Activated naive CD4-positive, alpha-beta T cell treated with anti-CD3 and anti-CD28 coated beads, Interleukin-2, amount 10 ng/mL, durations not matched to agents 7 days and 5 days (primary cell): ENCODE measurements at regions of chr12 and their contacts with region 1.

Region 1: GRCh38 chr12:93502802-93503623 is 35.7 kb downstream of the MRPL42 start:
- DNase-seq: peak; percentile 79
- H3K4me3 Mint-ChIP-seq: no peak overlapping the region
- H3K27ac Mint-ChIP-seq: no peak overlapping the region
- H3K4me1 Mint-ChIP-seq: peaks cover 34% of the 10 kb centered on the region
- H3K27me3 Mint-ChIP-seq: no peaks in the 10 kb centered on the region

Region 2: DNA sequence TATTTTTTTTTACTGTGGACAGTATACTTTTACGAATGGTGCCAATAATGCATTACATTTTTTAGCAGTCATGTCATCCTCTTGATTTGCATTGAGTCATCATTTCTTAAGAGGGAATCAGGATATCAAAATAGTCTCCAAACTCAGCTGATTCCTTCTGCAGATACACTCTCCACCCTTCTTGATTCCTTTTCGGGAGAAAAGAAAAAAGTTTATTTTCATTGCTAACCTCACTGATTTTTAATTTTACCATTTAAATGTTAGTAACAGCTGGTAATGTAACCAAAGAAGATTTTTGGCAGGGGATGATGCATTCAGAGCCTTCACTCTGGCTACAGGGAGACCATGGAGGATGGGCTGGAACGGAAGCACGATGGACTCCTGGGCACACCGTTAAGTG is 11.8 kb after region 1 on chr12:
- CTCF ChIA-PET with region 1: interaction called, 15 read pairs
- DNase-seq: no peak
- H3K4me3 Mint-ChIP-seq: no peak overlapping the region
- H3K27ac Mint-ChIP-seq: no peak overlapping the region
- H3K4me1 Mint-ChIP-seq: peaks cover 2% of the 10 kb centered on the region
- H3K27me3 Mint-ChIP-seq: peaks cover 1% of the 10 kb centered on the region

Region 3: GRCh38 chr12:93569656-93570551 is 66.9 kb after region 1 on chr12:
- CTCF ChIA-PET with region 1: interaction called, 44 read pairs
- DNase-seq: peak; percentile 89
- H3K4me3 Mint-ChIP-seq: peak overlapping the region; percentile 81
- H3K27ac Mint-ChIP-seq: peak overlapping the region; percentile 93
- H3K4me1 Mint-ChIP-seq: peaks cover 39% of the 10 kb centered on the region
- H3K27me3 Mint-ChIP-seq: peaks cover 18% of the 10 kb centered on the region

Region 4: DNA sequence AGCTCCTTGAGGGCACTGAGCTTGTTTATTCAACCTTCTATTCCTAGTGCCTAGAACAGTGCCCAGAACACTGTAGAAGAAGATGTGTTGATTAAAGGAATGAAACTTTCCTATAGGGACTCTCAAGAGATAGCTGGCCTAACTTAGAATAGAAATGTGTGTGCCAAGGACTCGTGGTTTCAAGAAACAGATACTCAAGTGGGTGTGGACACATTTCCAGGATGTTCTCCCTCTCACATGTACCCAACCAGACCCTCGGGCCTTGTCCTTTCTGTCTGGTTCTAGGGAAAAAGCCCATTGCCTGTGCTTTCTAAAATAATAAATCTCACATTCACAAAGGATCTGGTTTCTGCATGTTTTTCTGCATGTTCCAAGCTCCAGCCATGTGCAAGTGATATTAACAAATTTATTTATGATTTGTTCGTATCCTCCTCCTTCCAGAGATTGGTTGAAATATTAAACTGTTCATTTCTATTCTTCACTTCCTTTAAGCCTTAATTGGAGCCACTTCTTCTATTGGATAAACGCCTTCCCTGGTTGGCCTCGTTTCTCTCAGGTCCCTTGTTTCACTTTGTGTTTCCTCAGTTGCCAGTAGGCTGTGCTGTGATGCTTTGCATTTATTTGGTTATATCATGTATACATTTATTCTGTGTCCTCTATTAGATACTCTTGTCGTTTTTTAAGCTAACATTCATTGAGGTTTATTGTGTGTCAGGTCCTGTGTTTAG is 263.9 kb after region 1 on chr12:
- CTCF ChIA-PET with region 1: interaction called, 37 read pairs
- DNase-seq: peak; percentile 74
- H3K4me3 Mint-ChIP-seq: no peak overlapping the region
- H3K27ac Mint-ChIP-seq: peak overlapping the region; percentile 84
- H3K4me1 Mint-ChIP-seq: peaks cover 69% of the 10 kb centered on the region
- H3K27me3 Mint-ChIP-seq: peaks cover 8% of the 10 kb centered on the region

Region 5: GRCh38 chr12:94074980-94075928 is 572.2 kb after region 1 on chr12:
- CTCF ChIA-PET with region 1: interaction called, 12 read pairs
- DNase-seq: peak; percentile 30
- H3K4me3 Mint-ChIP-seq: no peak overlapping the region
- H3K27ac Mint-ChIP-seq: no peak overlapping the region
- H3K4me1 Mint-ChIP-seq: peaks cover 34% of the 10 kb centered on the region
- H3K27me3 Mint-ChIP-seq: peaks cover 12% of the 10 kb centered on the region